Left cardiac atrium (tissue), 4 donors: ENCODE measurements at regions of chr4 and their contacts with region 1.

Region 1: GRCh38 chr4:37946503-37947179 is 13.6 kb upstream of the PTTG2 start:
- DNase-seq: peak; percentile 27
- ATAC-seq: peak; percentile 66 to 69

Region 2: DNA sequence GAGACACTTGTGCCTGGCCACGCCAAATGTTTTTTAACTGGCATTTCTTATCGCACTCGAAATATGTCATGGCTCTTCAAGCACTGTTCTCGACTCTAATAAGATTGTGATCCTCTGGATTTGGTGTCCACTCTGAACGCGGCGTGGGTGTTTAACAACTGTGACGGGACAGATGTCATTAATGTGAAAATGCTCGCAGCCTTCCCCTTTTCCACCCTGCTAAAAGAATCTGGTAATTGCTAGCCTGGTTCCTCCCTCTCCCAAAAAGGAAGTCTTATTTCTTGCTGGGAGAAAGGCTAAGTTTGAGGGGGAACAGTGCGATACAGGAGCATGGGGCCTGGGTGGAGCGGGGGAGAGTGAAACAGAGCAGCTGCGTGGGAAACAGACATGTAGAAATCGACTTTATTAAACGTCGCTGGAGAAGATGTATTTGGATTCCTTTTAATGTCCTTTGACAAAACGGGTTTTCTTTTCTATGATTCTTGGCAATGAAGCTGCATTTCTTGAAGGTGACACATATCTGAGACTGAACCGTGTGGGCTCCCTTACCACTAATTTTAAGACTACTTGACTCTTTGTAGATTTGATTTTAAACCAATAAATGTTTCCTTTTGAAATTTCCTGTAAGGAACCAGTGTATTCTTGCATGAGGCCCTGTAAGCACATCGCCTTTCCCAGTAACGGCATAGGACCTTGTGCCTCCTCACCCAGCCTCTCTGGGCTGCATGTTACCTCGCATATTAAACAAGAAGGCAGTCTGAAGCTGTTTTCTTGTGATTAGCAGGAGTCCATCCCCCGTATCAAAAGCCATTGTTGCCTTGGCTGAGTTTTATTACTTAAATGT is 37.9 kb before region 1 on chr4:
- intact Hi-C with region 1: loop called in 1 of 2 experiments (anchors 5 kb)
- DNase-seq: peak; percentile 43
- ATAC-seq: peak; percentile 62 to 76

Region 3: DNA sequence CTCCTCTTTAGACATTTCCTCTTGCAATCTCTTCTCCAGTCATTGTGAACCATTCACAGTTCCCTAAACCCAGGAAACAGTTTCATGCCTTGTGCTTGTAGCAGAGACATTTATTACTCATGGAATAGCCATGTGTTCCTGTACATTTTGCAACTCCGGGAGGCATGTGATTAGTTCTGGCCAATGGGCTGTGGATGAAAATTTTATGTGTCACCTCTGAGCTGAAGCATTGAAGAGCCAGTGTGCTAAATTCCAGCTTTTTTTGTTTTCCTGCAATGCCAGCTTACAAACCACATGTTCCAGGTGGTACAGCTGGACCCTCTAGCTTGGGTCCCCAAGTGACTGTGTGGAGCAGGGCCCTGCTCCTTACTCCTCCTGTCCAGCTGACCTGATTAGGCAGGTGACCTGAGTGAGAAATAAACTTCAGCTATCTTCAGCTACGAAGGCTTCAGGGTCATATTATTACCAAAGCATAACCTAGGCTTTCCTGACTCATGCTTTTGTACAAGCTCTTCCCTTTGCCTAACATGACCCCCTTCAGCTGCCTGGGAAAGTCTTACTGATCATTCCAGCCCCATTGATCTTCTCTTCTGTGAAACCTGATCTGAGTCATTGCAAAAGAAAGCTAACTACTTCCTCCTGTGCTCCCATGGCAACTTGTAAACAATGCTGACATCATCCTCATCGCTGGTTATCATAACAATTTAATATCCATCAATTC is 214.0 kb after region 1 on chr4:
- intact Hi-C with region 1: no loop called
- DNase-seq: no peak
- ATAC-seq: peak; percentile 43 to 78